ENCODE measurements at regions of chr7 and their contacts with region 1.

Region 1: GRCh38 chr7:103344453-103345149 is at the start of gene DNAJC2:
- DNase-seq: peak; percentile 95
- H3K4me3 Mint-ChIP-seq: peak within 1 kb of the TSS; percentile 100
- H3K27ac Mint-ChIP-seq: peak within 1 kb of the TSS; percentile 99
- H3K4me1 Mint-ChIP-seq: peaks cover 50% of the 10 kb centered on the region
- H3K27me3 Mint-ChIP-seq: no peaks in the 10 kb centered on the region
- total RNA-seq, gene DNAJC2: 67.1 and 68.7 TPM in 2 replicates

Region 2: DNA sequence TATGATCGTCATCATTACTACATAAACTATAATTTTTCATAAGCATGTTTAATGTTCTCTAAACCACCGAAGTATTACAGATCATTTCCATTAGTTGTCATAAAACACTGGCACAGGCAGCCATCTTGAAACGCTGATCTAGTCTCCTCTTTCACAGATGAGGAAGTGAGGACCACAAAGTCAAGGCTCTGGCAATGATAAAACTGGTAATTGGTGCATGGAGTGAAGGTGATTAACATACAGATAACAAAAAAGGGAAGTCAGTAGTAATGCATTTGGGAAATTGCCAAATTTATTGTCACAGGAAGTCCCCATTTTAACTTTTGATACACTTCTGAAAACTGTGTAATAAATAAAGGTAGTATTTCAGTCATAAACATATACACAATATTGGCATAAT is 319.3 kb before region 1 on chr7:
- intact Hi-C with region 1: no loop called
- DNase-seq: no peak
- H3K4me3 Mint-ChIP-seq: no peak overlapping the region
- H3K27ac Mint-ChIP-seq: no peak overlapping the region
- H3K4me1 Mint-ChIP-seq: peaks cover 2% of the 10 kb centered on the region
- H3K27me3 Mint-ChIP-seq: peaks cover 2% of the 10 kb centered on the region

Region 3: GRCh38 chr7:103074519-103075336 is 269.9 kb before region 1 on chr7 and contains the starts of genes ARMC10 and FBXL13:
- intact Hi-C with region 1: loop called (anchors 10 kb)
- DNase-seq: peak; percentile 96
- H3K4me3 Mint-ChIP-seq: peak within 1 kb of the TSS; percentile 95
- H3K27ac Mint-ChIP-seq: peak within 1 kb of the TSS; percentile 92
- H3K4me1 Mint-ChIP-seq: peaks cover 28% of the 10 kb centered on the region
- H3K27me3 Mint-ChIP-seq: no peaks in the 10 kb centered on the region
- total RNA-seq, gene ARMC10: 53.4 and 56.5 TPM in 2 replicates
- total RNA-seq, gene FBXL13: 0.09 and 0.99 TPM in 2 replicates

Region 4: GRCh38 chr7:103148994-103149807 is 195.4 kb before region 1 on chr7 and contains the start of gene NAPEPLD:
- intact Hi-C with region 1: loop called (anchors 1 kb)
- DNase-seq: peak; percentile 91
- H3K4me3 Mint-ChIP-seq: peak within 1 kb of the TSS; percentile 98
- H3K27ac Mint-ChIP-seq: peak within 1 kb of the TSS; percentile 99
- H3K4me1 Mint-ChIP-seq: peaks cover 31% of the 10 kb centered on the region
- H3K27me3 Mint-ChIP-seq: no peaks in the 10 kb centered on the region
- total RNA-seq, gene NAPEPLD: 8.8 and 10.1 TPM in 2 replicates

Region 5: GRCh38 chr7:103296901-103297836 is 47.4 kb before region 1 on chr7 and contains the start of gene PMPCB:
- intact Hi-C with region 1: loop called (anchors 1 kb)
- DNase-seq: peak; percentile 99
- H3K4me3 Mint-ChIP-seq: peak within 1 kb of the TSS; percentile 99
- H3K27ac Mint-ChIP-seq: peak within 1 kb of the TSS; percentile 95
- H3K4me1 Mint-ChIP-seq: peaks cover 27% of the 10 kb centered on the region
- H3K27me3 Mint-ChIP-seq: peaks cover 16% of the 10 kb centered on the region
- total RNA-seq, gene PMPCB: 73.1 and 75.9 TPM in 2 replicates

Region 6: GRCh38 chr7:103396471-103396870 is 51.9 kb after region 1 on chr7:
- intact Hi-C with region 1: no loop called
- DNase-seq: no peak
- H3K4me3 Mint-ChIP-seq: no peak overlapping the region
- H3K27ac Mint-ChIP-seq: no peak overlapping the region
- H3K4me1 Mint-ChIP-seq: no peaks in the 10 kb centered on the region
- H3K27me3 Mint-ChIP-seq: peaks cover 9% of the 10 kb centered on the region

Region 7: GRCh38 chr7:103413407-103413806 is 68.8 kb after region 1 on chr7:
- intact Hi-C with region 1: loop called (anchors 5 kb)
- DNase-seq: no peak
- H3K4me3 Mint-ChIP-seq: no peak overlapping the region
- H3K27ac Mint-ChIP-seq: no peak overlapping the region
- H3K4me1 Mint-ChIP-seq: no peaks in the 10 kb centered on the region
- H3K27me3 Mint-ChIP-seq: peaks cover 25% of the 10 kb centered on the region

Region 8: GRCh38 chr7:105013221-105013815 is 1668.7 kb after region 1 on chr7:
- intact Hi-C with region 1: loop called (anchors 10 kb)
- DNase-seq: peak; percentile 98
- H3K4me3 Mint-ChIP-seq: peak overlapping the region; percentile 99
- H3K27ac Mint-ChIP-seq: peak overlapping the region; percentile 100
- H3K4me1 Mint-ChIP-seq: peaks cover 43% of the 10 kb centered on the region
- H3K27me3 Mint-ChIP-seq: peaks cover 2% of the 10 kb centered on the region